ENCODE measurements at regions of chr1 and their contacts with region 1.

Region 1: DNA sequence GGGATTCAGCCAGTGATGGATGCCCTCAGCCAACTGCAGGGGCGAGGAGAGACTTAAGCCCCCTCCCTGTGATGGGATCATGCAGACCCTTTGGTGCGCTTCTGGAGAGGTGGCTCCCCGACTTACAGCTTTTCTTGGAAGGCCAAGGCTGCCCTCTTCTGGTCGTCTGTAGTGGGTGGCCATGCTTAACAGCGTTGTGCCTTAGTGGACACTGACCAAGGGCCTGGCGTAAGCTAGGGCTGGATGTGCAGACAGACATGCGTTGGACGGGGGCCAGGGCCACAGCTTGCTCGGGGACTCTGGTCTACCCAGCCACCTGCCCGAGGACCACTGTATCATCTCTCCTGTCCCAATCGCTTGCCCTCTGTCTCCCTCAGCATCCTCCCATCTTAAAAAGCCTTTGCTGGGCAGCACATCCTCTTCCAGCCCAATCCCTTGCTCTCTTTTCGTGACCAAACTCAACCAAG is 5.5 kb downstream of the AZIN2 start:
- DNase-seq: peak; percentile 33
- ATAC-seq: peak; percentile 41
- H3K4me3 Mint-ChIP-seq: no peak overlapping the region
- H3K27ac Mint-ChIP-seq: peak overlapping the region; percentile 1
- H3K4me1 Mint-ChIP-seq: peaks cover 31% of the 10 kb centered on the region
- H3K27me3 Mint-ChIP-seq: peaks cover 3% of the 10 kb centered on the region
- CTCF ChIP-seq: no peak

Region 2: GRCh38 chr1:32521165-32521564 is 565.3 kb before region 1 on chr1:
- CTCF ChIA-PET with region 1: no interaction called
- POLR2A ChIA-PET with region 1: no interaction called
- intact Hi-C with region 1: loop called (anchors 2 kb)
- DNase-seq: no peak
- ATAC-seq: no peak
- H3K4me3 Mint-ChIP-seq: peak overlapping the region; percentile 82
- H3K27ac Mint-ChIP-seq: no peak overlapping the region
- H3K4me1 Mint-ChIP-seq: peaks cover 5% of the 10 kb centered on the region
- H3K27me3 Mint-ChIP-seq: no peaks in the 10 kb centered on the region
- CTCF ChIP-seq: no peak

Region 3: GRCh38 chr1:32716312-32717148 is 369.9 kb before region 1 on chr1:
- CTCF ChIA-PET with region 1: interaction called, 4 read pairs
- POLR2A ChIA-PET with region 1: no interaction called
- intact Hi-C with region 1: loop called (anchors 1 kb)
- DNase-seq: no peak
- ATAC-seq: peak; percentile 68
- H3K4me3 Mint-ChIP-seq: no peak overlapping the region
- H3K27ac Mint-ChIP-seq: no peak overlapping the region
- H3K4me1 Mint-ChIP-seq: peaks cover 7% of the 10 kb centered on the region
- H3K27me3 Mint-ChIP-seq: peaks cover 19% of the 10 kb centered on the region
- CTCF ChIP-seq: no peak

Region 4: DNA sequence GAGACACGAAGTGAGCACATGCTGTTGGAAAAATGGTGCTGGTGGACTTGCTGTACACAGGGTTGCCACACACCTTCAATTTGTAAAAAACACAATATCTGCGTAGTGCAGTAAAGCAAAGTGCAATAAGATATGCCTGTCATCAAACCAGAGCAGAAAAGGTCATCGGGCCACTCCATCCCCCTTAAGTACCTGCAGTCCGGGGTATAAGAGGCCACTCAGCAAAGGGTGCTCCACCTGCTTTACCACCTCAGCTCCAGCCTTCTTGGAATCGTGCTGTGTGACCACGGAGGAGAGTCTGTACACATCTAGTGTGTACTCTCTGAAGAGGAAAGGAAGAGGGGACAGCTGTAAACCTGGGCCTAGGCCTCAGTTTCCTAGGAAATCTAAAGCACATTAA is 280.1 kb before region 1 on chr1:
- CTCF ChIA-PET with region 1: no interaction called
- POLR2A ChIA-PET with region 1: no interaction called
- intact Hi-C with region 1: no loop called
- DNase-seq: no peak
- ATAC-seq: no peak
- H3K4me3 Mint-ChIP-seq: no peak overlapping the region
- H3K27ac Mint-ChIP-seq: no peak overlapping the region
- H3K4me1 Mint-ChIP-seq: peaks cover 10% of the 10 kb centered on the region
- H3K27me3 Mint-ChIP-seq: no peaks in the 10 kb centered on the region
- CTCF ChIP-seq: no peak

Region 5: GRCh38 chr1:32828341-32828740 is 258.1 kb before region 1 on chr1:
- CTCF ChIA-PET with region 1: no interaction called
- POLR2A ChIA-PET with region 1: no interaction called
- intact Hi-C with region 1: loop called (anchors 2 kb)
- DNase-seq: no peak
- ATAC-seq: no peak
- H3K4me3 Mint-ChIP-seq: no peak overlapping the region
- H3K27ac Mint-ChIP-seq: no peak overlapping the region
- H3K4me1 Mint-ChIP-seq: peaks cover 4% of the 10 kb centered on the region
- H3K27me3 Mint-ChIP-seq: no peaks in the 10 kb centered on the region
- CTCF ChIP-seq: no peak

Region 6: DNA sequence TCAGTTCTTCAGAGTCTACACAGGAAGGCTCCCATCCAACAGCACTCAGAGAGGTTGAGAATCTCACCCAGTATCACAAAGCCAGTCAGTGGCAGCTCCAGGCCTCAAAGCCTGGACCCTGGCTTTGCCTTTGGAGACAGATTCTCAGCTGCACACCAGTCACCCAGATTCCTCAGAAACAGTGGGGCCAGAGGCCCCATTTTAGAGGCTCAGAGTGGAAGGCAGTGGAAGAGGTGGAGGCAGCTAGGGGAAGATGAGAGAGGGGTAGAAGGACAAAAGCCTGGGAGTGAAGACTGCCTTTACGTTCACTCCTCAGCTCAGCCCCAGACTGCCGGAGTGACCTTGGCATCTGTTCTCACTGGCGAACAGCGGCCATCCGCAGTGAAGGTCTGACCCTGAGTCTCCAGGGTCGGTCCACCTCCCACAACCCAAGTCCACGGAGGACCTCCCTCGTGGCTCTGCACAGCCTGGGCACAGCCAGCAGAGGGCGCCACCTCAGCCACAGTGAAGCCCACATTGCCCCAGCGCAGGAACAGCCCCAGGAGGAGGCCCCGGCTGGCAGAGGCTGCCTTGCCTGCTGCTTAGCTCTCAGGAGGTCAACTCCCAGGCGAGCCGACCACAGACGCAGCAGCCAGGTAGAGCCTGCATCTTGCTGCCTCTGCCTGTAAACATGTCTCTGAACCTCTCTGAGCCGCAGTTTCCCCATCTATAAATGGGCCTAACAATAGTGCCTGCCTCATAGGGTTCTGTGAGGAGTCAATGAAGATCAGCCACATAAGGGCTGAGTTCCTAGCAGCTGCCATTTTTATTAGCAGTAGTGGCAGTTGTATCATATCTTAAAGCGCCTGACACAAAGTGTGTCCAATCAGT is 209.8 kb before region 1 on chr1:
- CTCF ChIA-PET with region 1: interaction called, 7 read pairs
- POLR2A ChIA-PET with region 1: no interaction called
- intact Hi-C with region 1: loop called (anchors 1 kb)
- DNase-seq: peak; percentile 51
- ATAC-seq: peak; percentile 57
- H3K4me3 Mint-ChIP-seq: no peak overlapping the region
- H3K27ac Mint-ChIP-seq: no peak overlapping the region
- H3K4me1 Mint-ChIP-seq: peaks cover 21% of the 10 kb centered on the region
- H3K27me3 Mint-ChIP-seq: peaks cover 33% of the 10 kb centered on the region
- CTCF ChIP-seq: no peak

Region 7: DNA sequence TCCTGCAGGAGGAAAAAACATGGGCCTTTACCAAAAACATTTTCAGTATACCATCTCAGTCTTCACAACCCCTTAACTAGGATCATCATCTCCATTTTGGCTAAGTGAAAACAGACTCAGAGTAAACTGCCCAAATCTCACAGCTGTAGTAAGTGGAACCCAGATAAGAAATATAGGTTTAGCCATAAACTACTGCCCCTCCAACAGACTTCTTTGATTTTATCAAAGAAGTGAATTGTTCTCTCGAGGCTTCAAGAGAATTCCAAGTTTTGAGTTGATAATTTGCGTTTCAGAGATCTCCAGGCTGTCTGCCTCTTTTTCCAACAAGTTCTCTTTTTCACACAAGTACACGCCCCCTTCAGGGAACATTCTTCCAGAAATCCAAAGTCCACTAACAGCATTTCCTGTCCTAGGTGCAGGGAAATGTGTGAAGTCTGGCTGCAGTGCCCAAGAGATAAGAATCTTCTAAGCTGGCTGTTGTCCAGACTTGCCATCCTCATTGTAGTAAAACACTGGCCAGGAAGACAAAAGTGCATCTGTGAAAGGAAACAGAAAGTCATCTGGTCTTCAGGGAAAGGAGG is 152.6 kb before region 1 on chr1:
- CTCF ChIA-PET with region 1: interaction called, 37 read pairs
- POLR2A ChIA-PET with region 1: no interaction called
- intact Hi-C with region 1: loop called (anchors 1 kb)
- DNase-seq: no peak
- ATAC-seq: no peak
- H3K4me3 Mint-ChIP-seq: no peak overlapping the region
- H3K27ac Mint-ChIP-seq: no peak overlapping the region
- H3K4me1 Mint-ChIP-seq: peaks cover 4% of the 10 kb centered on the region
- H3K27me3 Mint-ChIP-seq: no peaks in the 10 kb centered on the region
- CTCF ChIP-seq: no peak

Region 8: GRCh38 chr1:33111970-33112369 is 25.6 kb after region 1 on chr1:
- CTCF ChIA-PET with region 1: no interaction called
- POLR2A ChIA-PET with region 1: no interaction called
- intact Hi-C with region 1: no loop called
- DNase-seq: no peak
- ATAC-seq: no peak
- H3K4me3 Mint-ChIP-seq: no peak overlapping the region
- H3K27ac Mint-ChIP-seq: no peak overlapping the region
- H3K4me1 Mint-ChIP-seq: no peaks in the 10 kb centered on the region
- H3K27me3 Mint-ChIP-seq: no peaks in the 10 kb centered on the region
- CTCF ChIP-seq: no peak

Region 9: DNA sequence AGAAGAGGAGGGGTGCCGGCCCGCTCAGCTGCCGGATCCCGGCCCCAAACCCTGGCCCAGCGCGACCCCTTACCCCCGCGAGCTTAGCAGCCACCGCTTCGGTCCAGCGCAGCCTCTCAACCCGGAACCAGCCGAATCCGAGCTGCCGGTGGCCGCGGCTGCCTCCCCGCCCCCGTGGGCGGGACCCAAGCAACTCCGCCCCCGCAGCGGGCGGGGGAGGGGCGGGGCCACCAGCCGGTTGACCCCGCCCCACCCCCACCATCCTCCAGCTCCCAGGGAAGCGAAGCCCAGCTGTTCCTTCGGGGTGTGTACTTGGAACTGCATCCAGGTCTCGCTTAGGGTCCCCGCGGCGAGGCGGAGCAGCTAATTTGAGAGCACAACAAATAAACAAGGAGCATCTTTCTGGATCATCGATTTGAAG is 95.5 kb after region 1 on chr1 and contains the start of gene TRIM62:
- CTCF ChIA-PET with region 1: no interaction called
- POLR2A ChIA-PET with region 1: no interaction called
- intact Hi-C with region 1: no loop called
- DNase-seq: peak; percentile 80
- ATAC-seq: peak; percentile 67
- H3K4me3 Mint-ChIP-seq: peak within 1 kb of the TSS; percentile 89
- H3K27ac Mint-ChIP-seq: peak within 1 kb of the TSS; percentile 79
- H3K4me1 Mint-ChIP-seq: peaks cover 21% of the 10 kb centered on the region
- H3K27me3 Mint-ChIP-seq: peaks cover 9% of the 10 kb centered on the region
- CTCF ChIP-seq: no peak
- total RNA-seq, gene TRIM62: 10.1 and 10.9 TPM in 2 replicates